ENCODE measurements at regions of chr17 and their contacts with region 1.

Region 1: DNA sequence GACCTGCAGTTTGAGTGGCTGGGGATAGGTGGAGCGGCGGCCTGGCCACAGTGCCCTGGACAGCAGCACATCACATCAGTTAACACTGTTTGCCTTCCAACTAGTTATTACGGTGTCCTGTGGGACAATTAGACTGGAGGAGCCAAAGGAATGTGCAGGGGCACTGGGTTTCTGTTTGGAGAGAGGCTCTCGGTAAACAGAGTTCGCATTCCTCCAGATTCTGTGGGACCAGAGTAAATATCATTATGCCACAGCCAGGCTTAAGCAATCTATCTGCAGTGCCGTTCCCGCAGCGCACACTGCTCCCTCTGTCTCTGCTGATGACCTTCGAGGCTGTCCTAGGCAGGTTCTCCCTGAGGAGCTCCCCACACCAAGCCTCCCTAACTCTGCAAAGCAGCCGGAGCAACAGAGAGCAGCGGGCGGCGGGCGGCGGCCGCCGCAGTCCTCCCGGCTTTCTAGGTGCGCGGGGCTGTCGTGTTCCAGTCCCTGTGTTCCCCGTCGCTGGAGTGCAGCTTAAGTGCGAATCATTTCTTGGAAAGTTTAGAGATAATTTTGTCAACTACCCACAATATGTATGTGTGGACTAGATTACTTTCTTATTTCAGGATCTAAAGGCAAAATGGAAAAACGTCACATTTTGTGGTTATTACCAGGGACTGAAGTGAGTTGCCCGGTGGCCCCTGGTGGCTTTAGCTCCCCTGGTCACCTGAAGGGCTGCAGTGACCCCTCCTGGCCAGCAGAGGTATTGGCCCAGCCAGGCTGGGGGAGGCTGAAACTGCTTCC is 43.2 kb downstream of the PGS1 start:
- DNase-seq: peak; percentile 98
- H3K4me3 ChIP-seq: no peak overlapping the region; a peak in 1 of 4 replicates
- H3K27ac ChIP-seq: no peak overlapping the region
- H3K4me1 ChIP-seq: no peaks in the 10 kb centered on the region
- H3K27me3 ChIP-seq: no peaks in the 10 kb centered on the region
- CTCF ChIP-seq: peak; percentile 100
- EP300 ChIP-seq: no peak
- RAD21 ChIP-seq: peak; percentile 99

Region 2: GRCh38 chr17:78063489-78063888 is 358.2 kb before region 1 on chr17:
- CTCF ChIA-PET with region 1: no interaction called
- POLR2A ChIA-PET with region 1: no interaction called
- DNase-seq: no peak
- H3K4me3 ChIP-seq: no peak overlapping the region
- H3K27ac ChIP-seq: no peak overlapping the region
- H3K4me1 ChIP-seq: peaks cover 3 to 5% of the 10 kb centered on the region in 2 experiments; a peak in 2 of 4 replicates
- H3K27me3 ChIP-seq: no peaks in the 10 kb centered on the region
- CTCF ChIP-seq: no peak
- EP300 ChIP-seq: no peak
- RAD21 ChIP-seq: no peak

Region 3: DNA sequence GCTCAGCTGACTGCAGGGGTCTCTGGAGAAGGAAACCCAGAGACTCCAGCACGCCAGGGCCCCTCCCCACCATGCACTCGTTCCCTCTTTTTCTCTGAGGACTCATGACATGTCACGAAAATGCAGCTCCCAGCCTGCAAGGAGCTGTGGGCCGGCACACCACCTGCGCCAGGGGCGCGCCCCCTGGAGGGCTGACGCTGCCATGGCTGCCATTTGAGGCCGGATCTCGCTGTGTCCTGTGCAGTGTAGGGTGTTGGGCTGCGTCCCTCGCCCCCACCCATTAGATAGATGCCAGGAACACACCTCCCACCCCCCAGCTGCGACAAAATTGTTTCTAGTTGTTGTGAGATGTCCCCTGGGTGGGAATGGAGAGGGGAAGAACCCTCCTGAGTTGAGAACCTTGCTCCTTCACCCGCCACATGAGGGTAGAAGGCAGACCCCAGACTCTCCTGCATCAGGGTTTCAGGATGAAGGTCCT is 245.1 kb before region 1 on chr17:
- CTCF ChIA-PET with region 1: interaction called, 13 read pairs
- POLR2A ChIA-PET with region 1: no interaction called
- DNase-seq: peak; percentile 90
- H3K4me3 ChIP-seq: peak overlapping the region in 1 of 2 experiments; percentile 25; a peak in 1 of 4 replicates
- H3K27ac ChIP-seq: no peak overlapping the region
- H3K4me1 ChIP-seq: peaks cover 5 to 8% of the 10 kb centered on the region in 2 experiments; a peak in 2 of 4 replicates
- H3K27me3 ChIP-seq: no peaks in the 10 kb centered on the region
- CTCF ChIP-seq: peak; percentile 93
- EP300 ChIP-seq: no peak
- RAD21 ChIP-seq: peak; percentile 74

Region 4: GRCh38 chr17:78272181-78272913 is 149.3 kb before region 1 on chr17:
- CTCF ChIA-PET with region 1: interaction called, 18 read pairs
- POLR2A ChIA-PET with region 1: no interaction called
- DNase-seq: peak; percentile 15
- H3K4me3 ChIP-seq: no peak overlapping the region
- H3K27ac ChIP-seq: no peak overlapping the region; a peak in 1 of 4 replicates
- H3K4me1 ChIP-seq: peaks cover 0 to 54% of the 10 kb centered on the region in 2 experiments; a peak in 2 of 4 replicates
- H3K27me3 ChIP-seq: peaks cover 16% of the 10 kb centered on the region
- CTCF ChIP-seq: no peak
- EP300 ChIP-seq: no peak
- RAD21 ChIP-seq: no peak

Region 5: GRCh38 chr17:78313735-78314648 is 107.7 kb before region 1 on chr17:
- CTCF ChIA-PET with region 1: interaction called, 16 read pairs
- POLR2A ChIA-PET with region 1: no interaction called
- DNase-seq: peak; percentile 95
- H3K4me3 ChIP-seq: peak overlapping the region; percentile 48 to 50
- H3K27ac ChIP-seq: peak overlapping the region; percentile 18 to 99; a peak in 3 of 4 replicates
- H3K4me1 ChIP-seq: peaks cover 21 to 32% of the 10 kb centered on the region in 2 experiments; a peak in 3 of 4 replicates
- H3K27me3 ChIP-seq: no peaks in the 10 kb centered on the region
- CTCF ChIP-seq: 0 out of 2 replicates have a peak, but pooled peaks have one; percentile 8
- EP300 ChIP-seq: no peak
- RAD21 ChIP-seq: no peak

Region 6: GRCh38 chr17:78378225-78379130 is 43.2 kb before region 1 on chr17 and contains the start of gene PGS1:
- CTCF ChIA-PET with region 1: interaction called, 18 read pairs
- POLR2A ChIA-PET with region 1: no interaction called
- DNase-seq: peak; percentile 97
- H3K4me3 ChIP-seq: peak within 1 kb of the TSS; percentile 87 to 88
- H3K27ac ChIP-seq: peak within 1 kb of the TSS; percentile 64 to 81
- H3K4me1 ChIP-seq: peaks cover 16 to 57% of the 10 kb centered on the region in 2 experiments
- H3K27me3 ChIP-seq: no peaks in the 10 kb centered on the region
- CTCF ChIP-seq: no peak
- EP300 ChIP-seq: peak in 1 of 2 experiments; percentile 83; a peak in 1 of 4 replicates
- RAD21 ChIP-seq: peak; percentile 3; the same call in 1 of the 2 replicates
- polyA plus RNA-seq, gene PGS1: 88.4 and 106 TPM in 2 replicates

Region 7: DNA sequence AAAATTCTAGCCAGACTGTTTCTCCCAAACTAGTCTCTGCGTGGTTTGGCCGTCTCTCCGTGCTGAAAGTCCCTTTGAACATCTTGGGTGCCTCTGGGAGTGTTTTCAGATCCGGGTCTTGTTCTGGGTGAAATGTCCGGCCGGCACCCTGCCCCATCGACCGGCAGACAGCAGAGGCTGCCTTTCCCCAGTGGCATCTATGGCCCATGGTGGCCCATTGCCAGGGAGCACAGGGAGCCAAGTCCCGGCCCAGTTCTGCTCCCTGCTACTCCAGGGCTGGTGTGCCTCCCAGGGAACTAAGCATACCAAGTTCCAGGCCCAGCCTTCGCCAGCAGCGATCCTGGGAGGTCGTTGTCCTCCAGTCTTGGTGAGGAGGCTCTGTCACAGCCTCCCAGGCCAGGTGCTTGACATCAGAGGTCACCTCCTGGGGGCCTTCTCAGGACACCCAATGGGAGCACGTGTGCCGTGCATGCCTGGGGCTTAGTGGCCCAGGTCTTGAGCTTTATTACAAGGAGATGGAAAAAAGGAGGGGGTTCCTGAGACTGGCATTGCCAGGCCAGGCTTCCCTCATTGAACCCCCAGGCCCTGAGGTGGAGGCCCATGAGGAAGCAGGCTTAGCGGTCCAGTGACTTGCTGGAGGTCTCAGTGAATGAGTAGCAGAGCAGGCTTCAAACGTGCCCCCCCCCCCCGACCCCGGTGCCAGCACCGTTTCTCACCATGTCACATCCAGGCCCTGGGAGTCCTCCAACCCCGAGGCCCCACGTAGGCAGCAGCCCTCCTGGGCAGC is 10.7 kb after region 1 on chr17:
- CTCF ChIA-PET with region 1: interaction called, 54 read pairs
- POLR2A ChIA-PET with region 1: interaction called, 4 read pairs
- DNase-seq: no peak
- H3K4me3 ChIP-seq: no peak overlapping the region
- H3K27ac ChIP-seq: no peak overlapping the region
- H3K4me1 ChIP-seq: peaks cover 0 to 13% of the 10 kb centered on the region in 2 experiments; a peak in 1 of 4 replicates
- H3K27me3 ChIP-seq: no peaks in the 10 kb centered on the region
- CTCF ChIP-seq: no peak
- EP300 ChIP-seq: no peak
- RAD21 ChIP-seq: no peak